GM10248 (cell line): ENCODE measurements at regions of chr2 and their contacts with region 1.

Region 1: GRCh38 chr2:69717861-69718273 is 24.1 kb upstream of the ANXA4 start:
- DNase-seq: peak; percentile 55
- CTCF ChIP-seq: no peak

Region 2: GRCh38 chr2:69559442-69560146 is 158.3 kb before region 1 on chr2:
- CTCF ChIA-PET with region 1: interaction called, 51 read pairs
- POLR2A ChIA-PET with region 1: no interaction called
- DNase-seq: peak; percentile 51
- CTCF ChIP-seq: peak; percentile 68

Region 3: GRCh38 chr2:70440621-70441020 is 722.8 kb after region 1 on chr2:
- CTCF ChIA-PET with region 1: no interaction called
- POLR2A ChIA-PET with region 1: no interaction called
- DNase-seq: no peak
- CTCF ChIP-seq: no peak